Endothelial cell of umbilical vein (primary cell): ENCODE measurements at regions of chr13 and their contacts with region 1.

Region 1: DNA sequence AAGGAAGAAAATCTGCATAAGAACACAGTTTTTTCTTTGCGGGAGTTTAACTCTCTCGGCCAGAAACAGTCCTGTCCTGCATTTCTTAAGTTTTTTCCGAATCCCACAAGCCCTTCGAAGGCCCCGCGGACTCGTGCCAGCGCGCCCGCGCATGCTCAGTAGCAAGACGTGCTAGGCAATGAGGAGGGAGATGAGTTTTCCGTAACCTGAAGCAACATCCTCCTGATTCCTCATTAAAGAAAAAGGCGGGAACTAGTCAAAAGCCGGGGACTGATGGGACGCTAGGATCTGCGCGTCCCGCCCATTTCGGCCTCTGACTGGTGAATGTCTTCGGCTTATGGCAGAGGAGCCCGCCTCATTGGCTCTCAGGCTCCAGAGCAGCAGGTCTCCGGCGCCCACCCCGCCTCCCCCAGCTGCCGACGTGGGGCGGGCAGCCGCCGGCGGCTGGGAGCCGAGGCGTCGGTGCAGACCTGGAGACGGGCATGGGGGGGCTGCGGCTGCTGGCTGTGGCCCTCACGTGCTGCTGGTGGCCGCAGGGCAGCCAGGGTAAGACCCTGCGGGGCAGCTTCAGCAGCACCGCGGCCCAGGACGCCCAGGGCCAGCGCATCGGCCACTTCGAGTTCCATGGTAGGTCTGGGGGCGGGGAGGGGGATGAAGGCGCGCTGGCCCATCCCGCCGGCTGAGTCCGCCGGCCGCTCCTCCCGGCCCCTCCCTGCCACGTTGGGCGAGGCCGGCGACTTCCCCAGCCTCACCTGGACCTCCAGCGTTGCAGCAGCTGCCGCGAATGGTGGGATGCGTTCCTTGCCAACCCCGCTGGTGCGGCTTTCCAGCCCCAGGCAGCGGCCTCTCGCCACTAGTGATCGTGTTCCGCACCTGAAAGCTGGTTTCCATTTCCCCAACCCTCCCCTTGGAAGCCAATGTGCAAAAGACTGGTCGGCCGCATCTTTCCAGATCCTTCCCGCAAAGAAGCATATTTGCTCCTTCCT is at the start of gene GPR180:
- DNase-seq: peak; percentile 99
- H3K4me3 ChIP-seq: peak within 1 kb of the TSS; percentile 66 to 94 (median 92)
- H3K27ac ChIP-seq: peak within 1 kb of the TSS; percentile 68
- H3K4me1 ChIP-seq: peaks cover 11% of the 10 kb centered on the region
- H3K27me3 ChIP-seq: no peaks in the 10 kb centered on the region
- CTCF ChIP-seq: no peak
- POLR2A ChIP-seq: peak; percentile 85
- total RNA-seq, gene GPR180: 8.3 and 8.9 TPM in 2 replicates

Region 2: GRCh38 chr13:94312511-94313216 is 289.1 kb before region 1 on chr13:
- CTCF ChIA-PET with region 1: no interaction called
- POLR2A ChIA-PET with region 1: no interaction called
- dilution Hi-C with region 1: no loop called
- intact Hi-C with region 1: loop called (anchors 5 kb)
- DNase-seq: no peak
- H3K4me3 ChIP-seq: no peak overlapping the region
- H3K27ac ChIP-seq: peak overlapping the region; percentile 88
- H3K4me1 ChIP-seq: peaks cover 39% of the 10 kb centered on the region
- H3K27me3 ChIP-seq: no peaks in the 10 kb centered on the region
- CTCF ChIP-seq: no peak
- POLR2A ChIP-seq: no peak

Region 3: GRCh38 chr13:94416454-94417080 is 185.2 kb before region 1 on chr13:
- CTCF ChIA-PET with region 1: no interaction called
- POLR2A ChIA-PET with region 1: no interaction called
- dilution Hi-C with region 1: no loop called
- intact Hi-C with region 1: no loop called
- DNase-seq: peak; percentile 2
- H3K4me3 ChIP-seq: no peak overlapping the region
- H3K27ac ChIP-seq: no peak overlapping the region
- H3K4me1 ChIP-seq: no peaks in the 10 kb centered on the region
- H3K27me3 ChIP-seq: no peaks in the 10 kb centered on the region
- CTCF ChIP-seq: peak; percentile 24 to 35
- POLR2A ChIP-seq: no peak

Region 4: DNA sequence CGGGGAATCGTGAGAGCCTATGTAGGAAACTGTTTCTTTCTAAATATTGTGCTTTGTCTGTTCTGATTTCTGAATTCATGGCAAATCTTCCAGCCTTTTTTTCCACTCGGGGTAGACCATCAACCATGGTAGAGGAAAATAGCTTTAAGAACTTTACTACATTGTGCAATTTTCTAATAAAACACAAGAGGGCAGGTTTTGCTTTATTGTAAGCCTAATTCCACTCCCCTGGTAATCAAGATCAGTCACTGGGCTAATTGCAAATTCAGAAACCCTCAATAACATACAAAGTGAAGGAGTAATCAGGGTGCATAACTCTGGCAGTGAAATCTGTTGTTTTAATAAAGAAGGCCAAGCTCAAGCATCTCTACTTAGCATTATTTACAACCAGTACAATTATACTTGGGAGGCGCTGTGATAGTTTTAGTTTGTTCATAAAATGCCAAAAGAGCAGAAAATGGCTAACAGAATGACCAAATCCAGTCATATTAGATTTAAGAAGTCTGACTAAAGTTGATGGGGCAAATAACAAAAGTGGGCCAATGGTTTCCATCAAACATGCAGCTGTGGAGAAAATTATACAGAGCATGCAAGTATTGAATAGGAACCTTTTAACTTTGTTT is 166.0 kb before region 1 on chr13:
- CTCF ChIA-PET with region 1: interaction called, 10 read pairs
- POLR2A ChIA-PET with region 1: no interaction called
- dilution Hi-C with region 1: no loop called
- intact Hi-C with region 1: no loop called
- DNase-seq: peak; percentile 43
- H3K4me3 ChIP-seq: no peak overlapping the region
- H3K27ac ChIP-seq: no peak overlapping the region
- H3K4me1 ChIP-seq: no peaks in the 10 kb centered on the region
- H3K27me3 ChIP-seq: peaks cover 15 to 18% of the 10 kb centered on the region in 2 experiments
- CTCF ChIP-seq: peak; percentile 27 to 35
- POLR2A ChIP-seq: no peak

Region 5: DNA sequence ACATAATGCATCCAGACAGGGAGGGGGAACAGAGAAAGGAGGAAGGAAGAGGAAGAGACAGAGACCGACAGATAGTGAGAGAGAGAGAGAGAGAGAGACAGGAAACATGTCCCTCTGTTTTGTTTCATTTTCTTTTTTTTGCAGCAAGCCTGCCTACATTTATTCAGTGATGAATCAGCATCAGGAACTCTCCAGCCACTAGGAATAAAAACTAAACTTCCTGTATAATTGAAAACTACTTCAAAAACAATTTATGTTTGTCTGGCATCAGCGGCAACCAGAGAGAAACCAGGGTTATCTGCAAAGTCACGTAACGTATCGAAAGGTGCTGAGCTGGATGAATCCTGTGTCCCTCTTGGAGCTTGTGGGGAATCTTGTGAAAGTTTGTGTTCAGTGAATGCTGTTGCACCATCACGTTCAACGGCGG is 259.3 kb after region 1 on chr13:
- CTCF ChIA-PET with region 1: no interaction called
- POLR2A ChIA-PET with region 1: no interaction called
- dilution Hi-C with region 1: no loop called
- intact Hi-C with region 1: loop called (anchors 5 kb)
- DNase-seq: peak; percentile 80
- H3K4me3 ChIP-seq: peak overlapping the region in 2 of 3 experiments; percentile 37 to 77
- H3K27ac ChIP-seq: peak overlapping the region; percentile 91
- H3K4me1 ChIP-seq: peaks cover 43% of the 10 kb centered on the region
- H3K27me3 ChIP-seq: peaks cover 15 to 17% of the 10 kb centered on the region in 2 experiments
- CTCF ChIP-seq: no peak
- POLR2A ChIP-seq: no peak